GM18951 (cell line): ENCODE measurements at regions of chr5 and their contacts with region 1.

Region 1: GRCh38 chr5:54249210-54250028 is 61.0 kb downstream of the ARL15 start:
- POLR2A ChIP-seq: no peak

Region 2: DNA sequence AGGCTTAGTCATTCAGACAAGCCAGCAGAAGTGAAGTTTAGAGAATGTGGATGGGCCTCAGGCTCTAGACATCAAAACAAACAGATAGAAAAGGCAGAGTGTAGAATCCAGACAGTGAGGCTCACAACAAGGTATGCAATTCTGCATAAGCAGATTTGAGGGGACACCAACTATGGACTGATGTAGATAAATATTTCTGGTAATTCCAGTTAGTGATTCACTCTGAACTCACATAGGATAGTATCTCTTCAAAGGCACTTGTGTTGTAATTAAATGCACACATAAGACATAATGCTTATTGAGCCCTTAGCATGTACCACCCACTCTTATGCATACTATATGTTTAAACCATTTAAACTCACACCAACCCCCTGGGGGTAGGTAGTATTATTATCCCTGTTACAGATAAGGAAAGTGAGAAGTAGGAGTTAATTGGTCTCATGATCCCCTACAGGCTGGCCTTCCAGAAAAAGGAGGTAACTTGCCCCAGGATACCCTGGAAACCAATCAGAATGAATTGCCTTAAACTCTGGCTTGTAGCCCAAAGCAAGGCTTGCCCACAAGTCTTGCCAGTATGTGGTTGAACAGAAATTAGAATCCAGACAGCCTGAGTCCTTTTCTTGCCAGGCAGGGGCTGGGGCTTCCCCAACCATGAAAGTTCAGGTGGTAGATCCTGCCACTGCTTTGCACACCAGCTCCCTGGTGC is 166.6 kb after region 1 on chr5:
- in situ Hi-C with region 1: loop called (anchors 10 kb)
- POLR2A ChIP-seq: no peak